Activated B cell treated with CpG ODN at 0.5 μM for 24 hours (primary cell): ENCODE measurements at regions of chr6 and their contacts with region 1.

Region 1: GRCh38 chr6:69693749-69694148 is 103.1 kb downstream of the LMBRD1 start:
- DNase-seq: no peak
- ATAC-seq: no peak
- H3K4me3 Mint-ChIP-seq: no peak overlapping the region
- H3K27ac Mint-ChIP-seq: no peak overlapping the region
- H3K4me1 Mint-ChIP-seq: peaks cover 4% of the 10 kb centered on the region
- H3K27me3 Mint-ChIP-seq: no peaks in the 10 kb centered on the region
- CTCF ChIP-seq: no peak

Region 2: DNA sequence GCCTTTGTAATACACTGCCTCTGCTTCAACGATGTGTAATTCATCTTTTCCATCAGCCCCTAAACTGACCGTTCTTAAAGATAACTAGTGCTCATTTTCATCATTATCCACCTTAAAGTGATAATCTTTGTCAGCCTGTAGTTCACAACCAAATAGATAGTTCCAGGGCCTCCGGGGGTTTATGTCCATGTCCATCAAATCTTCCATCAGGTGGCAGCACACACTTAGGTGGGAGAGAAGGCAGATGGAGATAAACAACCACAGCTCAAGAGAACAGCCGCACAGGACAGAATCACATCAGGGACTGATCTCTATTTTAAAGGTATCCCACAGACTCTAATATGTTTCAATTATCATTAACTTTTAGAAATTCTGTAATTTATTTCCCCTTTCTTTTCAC is 12.2 kb after region 1 on chr6:
- CTCF ChIA-PET with region 1: no interaction called
- POLR2A ChIA-PET with region 1: no interaction called
- intact Hi-C with region 1: loop called (anchors 2 kb)
- DNase-seq: no peak
- ATAC-seq: no peak
- H3K4me3 Mint-ChIP-seq: no peak overlapping the region
- H3K27ac Mint-ChIP-seq: peak overlapping the region; percentile 10
- H3K4me1 Mint-ChIP-seq: peaks cover 8% of the 10 kb centered on the region
- H3K27me3 Mint-ChIP-seq: no peaks in the 10 kb centered on the region
- CTCF ChIP-seq: no peak

Region 3: GRCh38 chr6:70059039-70059719 is 365.4 kb after region 1 on chr6:
- CTCF ChIA-PET with region 1: no interaction called
- POLR2A ChIA-PET with region 1: no interaction called
- intact Hi-C with region 1: no loop called
- DNase-seq: no peak
- ATAC-seq: no peak
- H3K4me3 Mint-ChIP-seq: no peak overlapping the region
- H3K27ac Mint-ChIP-seq: no peak overlapping the region
- H3K4me1 Mint-ChIP-seq: peaks cover 6% of the 10 kb centered on the region
- H3K27me3 Mint-ChIP-seq: no peaks in the 10 kb centered on the region
- CTCF ChIP-seq: no peak